Colonic mucosa (tissue), 4 donors: ENCODE measurements at regions of chr12 and their contacts with region 1.

Region 1: GRCh38 chr12:10190558-10191388 is 11.9 kb downstream of the TMEM52B start:
- DNase-seq: peak; percentile 57
- H3K4me3 ChIP-seq: no peak overlapping the region
- H3K27ac ChIP-seq: no peak overlapping the region
- H3K4me1 ChIP-seq: no peaks in the 10 kb centered on the region
- H3K27me3 ChIP-seq: no peaks in the 10 kb centered on the region
- CTCF ChIP-seq: peak; percentile 76

Region 2: GRCh38 chr12:9922429-9922828 is 268.3 kb before region 1 on chr12:
- intact Hi-C with region 1: no loop called
- DNase-seq: no peak
- H3K4me3 ChIP-seq: no peak overlapping the region
- H3K27ac ChIP-seq: no peak overlapping the region
- H3K4me1 ChIP-seq: no peaks in the 10 kb centered on the region
- H3K27me3 ChIP-seq: no peaks in the 10 kb centered on the region
- CTCF ChIP-seq: no peak

Region 3: DNA sequence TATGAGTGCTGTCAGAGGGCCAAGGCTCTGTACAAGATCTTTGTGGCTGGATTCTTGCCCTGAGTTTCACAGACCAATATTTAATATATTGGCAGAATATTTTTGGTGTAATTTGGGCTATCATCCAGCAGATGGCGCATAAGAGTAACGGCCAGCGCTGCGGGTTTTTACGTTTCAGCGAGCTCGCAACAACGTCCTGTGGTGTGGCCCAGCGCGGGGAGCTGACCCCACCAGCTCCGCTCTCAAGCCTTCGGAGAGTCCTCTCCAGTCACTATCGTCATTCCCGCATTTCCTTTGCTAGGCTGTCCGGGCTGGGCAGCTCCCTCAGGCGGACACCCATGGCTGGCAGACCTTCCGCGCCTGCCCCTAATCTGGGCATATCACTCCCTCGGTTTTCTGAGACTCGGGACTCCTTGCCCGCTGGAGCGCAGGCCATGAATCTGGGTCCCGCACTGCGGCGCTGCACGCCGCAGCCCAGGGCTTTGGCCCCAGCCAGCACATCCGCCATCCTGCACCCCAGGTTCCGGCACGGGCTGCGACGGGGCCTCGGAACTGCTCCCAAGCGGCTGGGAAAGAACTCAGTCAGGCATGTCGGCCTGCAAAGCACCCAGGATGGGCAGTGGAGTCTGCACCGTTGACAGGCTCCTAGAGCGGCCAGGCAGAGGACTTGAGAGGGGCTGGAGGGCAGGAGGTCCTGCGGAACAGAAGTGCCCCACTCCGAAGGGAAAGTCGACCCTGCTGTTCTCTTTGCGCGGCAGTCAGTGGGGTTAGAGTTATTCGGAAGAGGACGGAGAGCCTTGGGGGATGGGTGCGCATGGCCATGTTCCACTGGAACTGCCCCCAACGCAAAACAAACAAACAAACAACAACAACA is 37.3 kb before region 1 on chr12:
- intact Hi-C with region 1: loop called (anchors 2 kb)
- DNase-seq: peak; percentile 66
- H3K4me3 ChIP-seq: peak overlapping the region; percentile 44
- H3K27ac ChIP-seq: peak overlapping the region; percentile 0
- H3K4me1 ChIP-seq: no peaks in the 10 kb centered on the region
- H3K27me3 ChIP-seq: no peaks in the 10 kb centered on the region
- CTCF ChIP-seq: peak; percentile 87